ENCODE measurements at regions of chr5 and their contacts with region 1.

Region 1: DNA sequence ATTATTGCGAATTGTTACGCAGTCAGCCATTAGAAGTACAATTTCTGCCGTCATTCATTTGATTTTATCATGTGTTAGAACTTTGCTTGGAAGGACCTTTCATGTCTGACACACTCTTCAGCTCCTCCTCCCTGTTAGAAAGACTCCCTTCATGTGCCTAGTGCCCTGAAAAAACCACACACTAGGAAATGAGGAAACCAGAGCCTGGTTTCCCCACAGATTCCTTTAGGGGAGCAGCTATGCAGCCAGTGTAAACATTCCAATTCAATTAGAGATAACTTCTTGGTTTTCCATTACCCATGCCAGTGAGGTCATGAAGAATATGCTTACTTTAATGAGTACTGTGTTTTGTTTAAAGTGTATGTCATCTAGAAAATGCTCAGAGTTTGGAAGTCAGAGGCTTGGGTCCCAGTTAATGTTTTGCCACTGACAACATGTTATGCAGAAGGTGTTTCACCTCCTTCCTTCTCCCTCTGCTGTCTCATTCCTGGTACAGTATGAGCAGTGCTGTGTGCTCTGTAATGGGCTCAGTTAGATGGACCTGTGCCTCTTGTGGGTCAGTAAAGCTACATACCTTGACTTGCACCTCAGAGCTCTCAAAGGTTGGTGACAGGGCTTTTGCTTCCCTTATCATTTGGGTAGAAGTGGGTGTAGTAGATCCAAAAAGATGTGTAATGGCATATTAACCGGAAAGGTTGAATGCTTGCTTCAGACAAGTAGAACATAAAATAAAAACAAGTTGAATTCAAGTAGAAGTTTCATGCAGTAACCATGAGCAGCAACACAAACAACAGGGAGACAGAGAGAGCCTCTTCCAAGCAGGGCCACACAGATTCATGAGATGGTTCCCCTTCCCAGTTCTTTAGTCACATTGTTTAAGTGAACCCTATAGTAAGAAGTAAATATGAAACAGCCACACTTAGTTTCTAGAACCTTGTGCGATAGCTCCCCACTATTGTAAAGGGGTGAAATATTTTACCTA is 52.6 kb upstream of the TNFAIP8 start:
- DNase-seq: peak; percentile 93
- H3K4me3 ChIP-seq: no peak overlapping the region
- H3K27ac ChIP-seq: peak overlapping the region; percentile 79
- H3K4me1 ChIP-seq: peaks cover 35% of the 10 kb centered on the region
- H3K27me3 ChIP-seq: no peaks in the 10 kb centered on the region
- CTCF ChIP-seq: no peak
- POLR2A ChIP-seq: no peak

Region 2: DNA sequence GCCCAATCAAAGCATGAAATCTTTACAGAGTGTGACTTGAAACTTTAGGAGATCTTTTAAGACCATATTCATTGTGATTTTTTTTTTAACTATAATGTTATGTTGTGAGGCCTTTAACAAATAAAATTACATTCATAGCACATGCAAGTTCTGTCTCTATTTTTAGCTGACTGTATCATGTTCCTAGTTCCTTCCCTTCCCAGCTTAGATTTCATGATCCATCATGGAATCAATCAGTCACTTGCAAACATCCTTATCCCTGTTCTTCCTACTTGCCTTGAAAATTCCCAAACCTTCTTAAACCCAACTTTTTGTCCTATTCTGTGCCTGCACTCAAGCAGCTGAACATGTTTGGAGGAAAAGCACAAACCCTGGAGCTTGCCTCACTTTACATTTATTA is 90.5 kb before region 1 on chr5:
- CTCF ChIA-PET with region 1: no interaction called
- POLR2A ChIA-PET with region 1: no interaction called
- dilution Hi-C with region 1: no loop called
- intact Hi-C with region 1: no loop called
- DNase-seq: no peak
- H3K4me3 ChIP-seq: no peak overlapping the region
- H3K27ac ChIP-seq: no peak overlapping the region
- H3K4me1 ChIP-seq: no peaks in the 10 kb centered on the region
- H3K27me3 ChIP-seq: no peaks in the 10 kb centered on the region
- CTCF ChIP-seq: no peak
- POLR2A ChIP-seq: no peak

Region 3: DNA sequence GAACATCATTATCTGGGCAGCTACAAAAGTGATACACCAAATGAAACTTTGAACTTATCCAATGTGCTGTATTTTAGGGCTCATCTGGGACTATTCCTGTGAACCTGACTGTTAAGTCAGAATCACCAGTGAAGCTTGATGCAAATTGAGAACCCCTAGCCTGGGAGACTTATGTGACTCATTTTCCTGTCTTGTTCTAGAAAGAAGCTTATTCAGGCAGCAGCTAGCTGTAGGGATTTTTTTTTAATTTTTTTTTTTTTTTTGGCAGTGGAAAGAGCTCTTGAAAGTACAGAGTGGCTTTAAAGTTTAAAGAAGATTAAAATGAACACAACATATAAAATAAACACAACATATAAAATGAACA is 28.5 kb before region 1 on chr5:
- CTCF ChIA-PET with region 1: interaction called, 5 read pairs
- POLR2A ChIA-PET with region 1: interaction called, 5 read pairs
- dilution Hi-C with region 1: no loop called
- intact Hi-C with region 1: loop called (anchors 1 kb)
- DNase-seq: peak; percentile 79
- H3K4me3 ChIP-seq: no peak overlapping the region
- H3K27ac ChIP-seq: peak overlapping the region; percentile 44
- H3K4me1 ChIP-seq: peaks cover 16% of the 10 kb centered on the region
- H3K27me3 ChIP-seq: no peaks in the 10 kb centered on the region
- CTCF ChIP-seq: no peak
- POLR2A ChIP-seq: no peak

Region 4: GRCh38 chr5:119315516-119315949 is 12.3 kb after region 1 on chr5:
- CTCF ChIA-PET with region 1: interaction called, 10 read pairs
- POLR2A ChIA-PET with region 1: no interaction called
- dilution Hi-C with region 1: no loop called
- intact Hi-C with region 1: no loop called
- DNase-seq: peak; percentile 43
- H3K4me3 ChIP-seq: no peak overlapping the region
- H3K27ac ChIP-seq: no peak overlapping the region
- H3K4me1 ChIP-seq: no peaks in the 10 kb centered on the region
- H3K27me3 ChIP-seq: no peaks in the 10 kb centered on the region
- CTCF ChIP-seq: peak; percentile 12 to 21
- POLR2A ChIP-seq: no peak

Region 5: GRCh38 chr5:119322948-119323537 is 19.8 kb after region 1 on chr5:
- CTCF ChIA-PET with region 1: interaction called, 14 read pairs
- POLR2A ChIA-PET with region 1: no interaction called
- dilution Hi-C with region 1: no loop called
- intact Hi-C with region 1: loop called (anchors 1 kb)
- DNase-seq: peak; percentile 29
- H3K4me3 ChIP-seq: no peak overlapping the region
- H3K27ac ChIP-seq: peak overlapping the region; percentile 91
- H3K4me1 ChIP-seq: peaks cover 19% of the 10 kb centered on the region
- H3K27me3 ChIP-seq: no peaks in the 10 kb centered on the region
- CTCF ChIP-seq: no peak
- POLR2A ChIP-seq: no peak

Region 6: GRCh38 chr5:119332978-119333401 is 29.8 kb after region 1 on chr5:
- CTCF ChIA-PET with region 1: interaction called, 10 read pairs
- POLR2A ChIA-PET with region 1: no interaction called
- dilution Hi-C with region 1: no loop called
- intact Hi-C with region 1: no loop called
- DNase-seq: no peak
- H3K4me3 ChIP-seq: no peak overlapping the region
- H3K27ac ChIP-seq: no peak overlapping the region
- H3K4me1 ChIP-seq: no peaks in the 10 kb centered on the region
- H3K27me3 ChIP-seq: no peaks in the 10 kb centered on the region
- CTCF ChIP-seq: no peak
- POLR2A ChIP-seq: no peak

Measured in endothelial cell of umbilical vein (primary cell).